Naive thymus-derived CD4-positive, alpha-beta T cell (primary cell): ENCODE measurements at regions of chr5 and their contacts with region 1.

Region 1: GRCh38 chr5:43484106-43484849 is 613 bp upstream of the TMEM267 start:
- DNase-seq: peak; percentile 69 to 91 (median 88)
- ATAC-seq: peak; percentile 83
- H3K4me3 ChIP-seq: peak overlapping the region; percentile 72
- H3K4me3 Mint-ChIP-seq: peak overlapping the region; percentile 95 to 100 (median 98)
- H3K27ac ChIP-seq: peak overlapping the region; percentile 92
- H3K27ac Mint-ChIP-seq: peak overlapping the region; percentile 97 to 100 (median 100)
- H3K4me1 ChIP-seq: peaks cover 20 to 28% of the 10 kb centered on the region in 2 donors
- H3K4me1 Mint-ChIP-seq: peaks cover 23 to 69% (median 60%) of the 10 kb centered on the region in 7 donors
- H3K27me3 ChIP-seq: no peaks in the 10 kb centered on the region
- H3K27me3 Mint-ChIP-seq: no peaks in the 10 kb centered on the region

Region 2: GRCh38 chr5:41924872-41925554 is 1559.3 kb before region 1 on chr5 and contains the start of gene FBXO4:
- CTCF ChIA-PET with region 1: no interaction called
- POLR2A ChIA-PET with region 1: interaction called, 4 read pairs
- intact Hi-C with region 1: loop called (anchors 1 to 10 kb)
- DNase-seq: peak; percentile 79 to 92 (median 88)
- ATAC-seq: peak; percentile 97
- H3K4me3 ChIP-seq: peak within 1 kb of the TSS; percentile 85
- H3K4me3 Mint-ChIP-seq: peak within 1 kb of the TSS; percentile 83 to 93 (median 88)
- H3K27ac ChIP-seq: peak within 1 kb of the TSS; percentile 96
- H3K27ac Mint-ChIP-seq: peak within 1 kb of the TSS; percentile 93 to 100 (median 97)
- H3K4me1 ChIP-seq: peaks cover 6 to 14% of the 10 kb centered on the region in 2 donors
- H3K4me1 Mint-ChIP-seq: peaks cover 9 to 43% (median 25%) of the 10 kb centered on the region in 7 donors
- H3K27me3 ChIP-seq: no peaks in the 10 kb centered on the region
- H3K27me3 Mint-ChIP-seq: no peaks in the 10 kb centered on the region
- total RNA-seq, gene FBXO4: 10.9 to 15.0 (median 14.6) TPM

Region 3: GRCh38 chr5:42779083-42779482 is 705.2 kb before region 1 on chr5:
- CTCF ChIA-PET with region 1: no interaction called
- POLR2A ChIA-PET with region 1: no interaction called
- intact Hi-C with region 1: no loop called
- DNase-seq: no peak
- ATAC-seq: no peak
- H3K4me3 ChIP-seq: no peak overlapping the region
- H3K4me3 Mint-ChIP-seq: no peak overlapping the region
- H3K27ac ChIP-seq: no peak overlapping the region
- H3K27ac Mint-ChIP-seq: no peak overlapping the region
- H3K4me1 ChIP-seq: no peaks in the 10 kb centered on the region
- H3K4me1 Mint-ChIP-seq: peaks cover 0 to 8% (median 0%) of the 10 kb centered on the region in 7 donors
- H3K27me3 ChIP-seq: no peaks in the 10 kb centered on the region
- H3K27me3 Mint-ChIP-seq: peaks cover 0 to 15% (median 0%) of the 10 kb centered on the region in 5 donors

Region 4: GRCh38 chr5:43008369-43009153 is 475.7 kb before region 1 on chr5:
- CTCF ChIA-PET with region 1: interaction called, 5 read pairs
- POLR2A ChIA-PET with region 1: interaction called, 40 read pairs
- intact Hi-C with region 1: loop called in 1 of 2 experiments (anchors 5 kb)
- DNase-seq: peak; percentile 79 to 95 (median 90)
- ATAC-seq: peak; percentile 78
- H3K4me3 ChIP-seq: peak overlapping the region; percentile 72
- H3K4me3 Mint-ChIP-seq: peak overlapping the region; percentile 85 to 98 (median 92)
- H3K27ac ChIP-seq: peak overlapping the region; percentile 92
- H3K27ac Mint-ChIP-seq: peak overlapping the region; percentile 96 to 100 (median 98)
- H3K4me1 ChIP-seq: peaks cover 22 to 24% of the 10 kb centered on the region in 2 donors
- H3K4me1 Mint-ChIP-seq: peaks cover 17 to 47% (median 29%) of the 10 kb centered on the region in 7 donors
- H3K27me3 ChIP-seq: no peaks in the 10 kb centered on the region
- H3K27me3 Mint-ChIP-seq: peaks cover 0 to 4% (median 0%) of the 10 kb centered on the region in 5 donors

Region 5: GRCh38 chr5:43105369-43106289 is 378.6 kb before region 1 on chr5:
- CTCF ChIA-PET with region 1: interaction called, 9 read pairs
- POLR2A ChIA-PET with region 1: interaction called, 10 read pairs
- intact Hi-C with region 1: loop called (anchors 1 kb)
- DNase-seq: peak; percentile 75 to 90 (median 85)
- ATAC-seq: peak; percentile 99
- H3K4me3 ChIP-seq: peak overlapping the region; percentile 66
- H3K4me3 Mint-ChIP-seq: peak overlapping the region; percentile 77 to 93 (median 89)
- H3K27ac ChIP-seq: peak overlapping the region; percentile 59
- H3K27ac Mint-ChIP-seq: peak overlapping the region; percentile 43 to 92 (median 88)
- H3K4me1 ChIP-seq: peaks cover 6 to 22% of the 10 kb centered on the region in 2 donors
- H3K4me1 Mint-ChIP-seq: peaks cover 21 to 49% (median 38%) of the 10 kb centered on the region in 7 donors
- H3K27me3 ChIP-seq: no peaks in the 10 kb centered on the region
- H3K27me3 Mint-ChIP-seq: no peaks in the 10 kb centered on the region

Region 6: GRCh38 chr5:43389679-43390329 is 94.5 kb before region 1 on chr5:
- CTCF ChIA-PET with region 1: interaction called, 4 read pairs
- POLR2A ChIA-PET with region 1: interaction called, 59 read pairs
- intact Hi-C with region 1: loop called (anchors 2 kb)
- DNase-seq: peak in 8 of 9 donors; percentile 28 to 60 (median 50)
- ATAC-seq: peak; percentile 92
- H3K4me3 ChIP-seq: no peak overlapping the region
- H3K4me3 Mint-ChIP-seq: no peak overlapping the region
- H3K27ac ChIP-seq: no peak overlapping the region
- H3K27ac Mint-ChIP-seq: peak overlapping the region in 2 of 9 donors; percentile 62 to 67
- H3K4me1 ChIP-seq: peaks cover 0 to 7% of the 10 kb centered on the region in 2 donors
- H3K4me1 Mint-ChIP-seq: peaks cover 4 to 48% (median 34%) of the 10 kb centered on the region in 7 donors
- H3K27me3 ChIP-seq: no peaks in the 10 kb centered on the region
- H3K27me3 Mint-ChIP-seq: no peaks in the 10 kb centered on the region

Region 7: DNA sequence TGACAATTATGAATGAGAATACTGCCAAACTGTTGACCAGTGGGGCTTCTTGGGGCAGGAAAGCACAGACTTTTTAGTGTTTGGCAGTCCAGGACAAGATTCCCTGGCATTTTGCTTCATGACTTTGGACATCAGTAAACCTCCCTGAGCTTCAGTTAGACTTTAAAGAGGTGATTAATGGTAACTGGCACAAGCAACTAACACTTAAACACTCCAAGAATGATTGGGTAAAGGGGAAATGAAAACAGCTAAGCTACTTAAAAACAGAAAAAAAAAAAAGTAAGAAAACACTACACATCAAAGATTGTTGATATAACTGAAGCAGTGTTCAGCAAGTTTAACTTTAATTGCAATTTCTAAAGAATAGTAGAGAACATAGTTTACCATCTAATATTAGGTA is 59.2 kb after region 1 on chr5:
- CTCF ChIA-PET with region 1: no interaction called
- POLR2A ChIA-PET with region 1: interaction called, 11 read pairs
- intact Hi-C with region 1: no loop called
- DNase-seq: no peak
- ATAC-seq: no peak
- H3K4me3 ChIP-seq: no peak overlapping the region
- H3K4me3 Mint-ChIP-seq: no peak overlapping the region
- H3K27ac ChIP-seq: no peak overlapping the region
- H3K27ac Mint-ChIP-seq: peak overlapping the region in 2 of 9 donors; percentile 17 to 34
- H3K4me1 ChIP-seq: no peaks in the 10 kb centered on the region
- H3K4me1 Mint-ChIP-seq: peaks cover 7 to 32% (median 16%) of the 10 kb centered on the region in 7 donors
- H3K27me3 ChIP-seq: no peaks in the 10 kb centered on the region
- H3K27me3 Mint-ChIP-seq: no peaks in the 10 kb centered on the region

Region 8: DNA sequence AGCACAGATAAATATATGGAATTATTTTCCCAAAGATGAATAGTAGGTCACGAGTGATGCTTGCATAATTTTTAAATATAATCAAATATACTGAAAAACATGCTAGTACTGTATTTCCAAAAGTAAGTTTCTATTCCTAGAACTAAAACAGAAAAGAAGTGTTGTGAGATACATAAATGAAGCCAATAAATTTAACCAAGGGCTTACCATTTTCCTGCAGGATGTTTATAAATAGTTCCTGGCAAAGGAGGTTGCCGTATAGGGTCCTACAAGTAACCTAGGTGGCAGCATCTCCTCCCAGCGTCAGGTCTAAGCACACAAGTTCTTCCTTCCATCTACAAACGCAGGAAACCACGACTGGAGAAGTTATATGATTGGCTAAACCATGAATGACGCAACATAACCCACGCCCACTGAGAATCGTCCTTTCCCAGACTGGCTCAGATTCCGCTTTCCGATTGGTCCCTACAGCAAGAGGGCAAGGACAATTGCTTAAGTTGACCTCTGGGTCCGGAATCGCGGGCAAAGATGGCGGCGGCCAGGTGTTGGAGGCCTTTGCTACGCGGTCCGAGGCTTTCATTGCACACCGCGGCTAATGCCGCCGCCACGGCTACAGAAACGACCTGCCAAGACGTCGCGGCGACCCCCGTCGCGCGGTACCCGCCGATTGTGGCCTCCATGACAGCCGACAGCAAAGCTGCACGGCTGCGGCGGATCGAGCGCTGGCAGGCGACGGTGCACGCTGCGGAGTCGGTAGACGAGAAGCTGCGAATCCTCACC is 1324.3 kb after region 1 on chr5 and contains the start of gene MRPS30:
- CTCF ChIA-PET with region 1: no interaction called
- POLR2A ChIA-PET with region 1: interaction called, 5 read pairs
- intact Hi-C with region 1: loop called in 1 of 2 experiments (anchors 2 kb)
- DNase-seq: peak; percentile 65 to 96 (median 94)
- ATAC-seq: peak; percentile 98
- H3K4me3 ChIP-seq: peak within 1 kb of the TSS; percentile 85
- H3K4me3 Mint-ChIP-seq: peak within 1 kb of the TSS; percentile 86 to 98 (median 96)
- H3K27ac ChIP-seq: peak within 1 kb of the TSS; percentile 81
- H3K27ac Mint-ChIP-seq: peak within 1 kb of the TSS; percentile 84 to 98 (median 95)
- H3K4me1 ChIP-seq: peaks cover 0 to 20% of the 10 kb centered on the region in 2 donors
- H3K4me1 Mint-ChIP-seq: peaks cover 12 to 53% (median 36%) of the 10 kb centered on the region in 7 donors
- H3K27me3 ChIP-seq: no peaks in the 10 kb centered on the region
- H3K27me3 Mint-ChIP-seq: peaks cover 0 to 5% (median 3%) of the 10 kb centered on the region in 5 donors
- total RNA-seq, gene MRPS30: 31.1 to 61.0 (median 47.1) TPM